Breast epithelium (tissue), 4 donors: ENCODE measurements at regions of chr22 and their contacts with region 1.

Region 1: GRCh38 chr22:19070397-19071169 is 51.6 kb downstream of the DGCR2 start:
- DNase-seq: no peak
- H3K4me3 ChIP-seq: no peak overlapping the region
- H3K27ac ChIP-seq: no peak overlapping the region
- H3K4me1 ChIP-seq: no peaks in the 10 kb centered on the region
- H3K27me3 ChIP-seq: no peaks in the 10 kb centered on the region
- CTCF ChIP-seq: no peak
- POLR2A ChIP-seq: no peak

Region 2: GRCh38 chr22:19098157-19098556 is 27.6 kb after region 1 on chr22:
- intact Hi-C with region 1: loop called (anchors 1 kb)
- DNase-seq: no peak
- H3K4me3 ChIP-seq: no peak overlapping the region
- H3K27ac ChIP-seq: no peak overlapping the region
- H3K4me1 ChIP-seq: no peaks in the 10 kb centered on the region
- H3K27me3 ChIP-seq: no peaks in the 10 kb centered on the region
- CTCF ChIP-seq: no peak
- POLR2A ChIP-seq: no peak